ENCODE measurements at regions of chr5 and their contacts with region 1.

Region 1: GRCh38 chr5:134577796-134578363 is 52.4 kb downstream of the JADE2 start:
- DNase-seq: peak; percentile 83 to 90
- ATAC-seq: peak; percentile 62 to 71 (median 66)
- H3K4me3 ChIP-seq: no peak overlapping the region
- H3K27ac ChIP-seq: no peak overlapping the region
- H3K4me1 ChIP-seq: peaks cover 32% of the 10 kb centered on the region
- H3K27me3 ChIP-seq: no peaks in the 10 kb centered on the region
- CTCF ChIP-seq: peak; percentile 83

Region 2: GRCh38 chr5:134411546-134412266 is 166.2 kb before region 1 on chr5 and contains the start of gene CDKN2AIPNL:
- intact Hi-C with region 1: loop called (anchors 5 to 10 kb)
- DNase-seq: peak; percentile 91 to 95
- ATAC-seq: peak; percentile 97 to 99 (median 98)
- H3K4me3 ChIP-seq: peak within 1 kb of the TSS; percentile 88
- H3K27ac ChIP-seq: peak within 1 kb of the TSS; percentile 90
- H3K4me1 ChIP-seq: peaks cover 24% of the 10 kb centered on the region
- H3K27me3 ChIP-seq: no peaks in the 10 kb centered on the region
- CTCF ChIP-seq: peak; percentile 72
- total RNA-seq, gene CDKN2AIPNL: 31.4 to 45.4 (median 39.8) TPM

Region 3: DNA sequence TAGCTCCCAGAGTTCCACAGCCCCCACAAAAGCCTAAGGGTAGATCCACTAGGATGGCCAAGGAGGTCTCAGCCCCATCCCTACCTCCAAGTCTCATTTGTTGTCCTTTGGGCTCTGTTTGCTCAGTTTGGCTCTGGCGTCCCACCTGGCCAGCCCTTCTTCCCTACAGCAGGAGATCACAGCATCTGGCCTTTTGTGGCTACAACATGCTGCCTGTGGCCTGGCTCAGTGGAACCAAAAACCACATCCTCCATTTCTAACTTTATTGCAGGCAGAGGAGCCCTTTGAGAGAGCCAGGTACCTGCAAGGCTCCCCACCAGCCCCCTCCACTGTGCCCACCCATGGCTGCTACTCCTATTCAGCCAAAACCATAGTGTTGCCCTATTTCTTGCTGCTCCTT is 41.0 kb before region 1 on chr5:
- intact Hi-C with region 1: loop called in 1 of 2 experiments (anchors 5 kb)
- DNase-seq: no peak
- ATAC-seq: no peak
- H3K4me3 ChIP-seq: no peak overlapping the region
- H3K27ac ChIP-seq: no peak overlapping the region
- H3K4me1 ChIP-seq: peaks cover 15% of the 10 kb centered on the region
- H3K27me3 ChIP-seq: no peaks in the 10 kb centered on the region
- CTCF ChIP-seq: no peak